Ascending aorta (tissue), 2 donors: ENCODE measurements at regions of chr4 and their contacts with region 1.

Region 1: GRCh38 chr4:94814237-94814636 is 56.5 kb downstream of the BMPR1B start:
- DNase-seq: no peak
- H3K4me3 ChIP-seq: no peak overlapping the region
- H3K27ac ChIP-seq: no peak overlapping the region
- H3K4me1 ChIP-seq: peaks cover 0 to 2% of the 10 kb centered on the region in 2 donors
- H3K27me3 ChIP-seq: no peaks in the 10 kb centered on the region
- CTCF ChIP-seq: no peak

Region 2: DNA sequence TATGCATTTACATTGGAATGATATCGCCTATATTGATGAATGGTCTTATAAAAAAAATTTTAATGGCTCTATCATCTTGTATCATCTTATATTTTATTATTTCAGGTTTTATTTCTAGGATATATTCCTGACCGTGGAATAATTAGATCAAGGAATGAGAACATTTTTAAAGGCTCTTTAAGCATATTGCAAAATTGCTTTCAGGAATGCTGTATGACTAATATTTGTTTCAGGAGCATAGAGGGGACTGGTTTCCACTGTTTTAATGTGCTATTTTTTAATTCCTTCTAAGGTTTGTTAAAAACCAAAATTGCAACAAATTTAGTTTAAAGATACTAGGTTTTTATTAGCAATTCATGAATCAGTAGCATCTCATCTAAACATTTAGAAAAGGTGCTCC is 63.7 kb after region 1 on chr4:
- intact Hi-C with region 1: loop called (anchors 5 kb)
- DNase-seq: no peak
- H3K4me3 ChIP-seq: no peak overlapping the region
- H3K27ac ChIP-seq: peak overlapping the region in 1 of 2 donors; percentile 1
- H3K4me1 ChIP-seq: no peaks in the 10 kb centered on the region
- H3K27me3 ChIP-seq: no peaks in the 10 kb centered on the region
- CTCF ChIP-seq: no peak

Region 3: GRCh38 chr4:94965852-94966251 is 151.6 kb after region 1 on chr4:
- intact Hi-C with region 1: no loop called
- DNase-seq: no peak
- H3K4me3 ChIP-seq: no peak overlapping the region
- H3K27ac ChIP-seq: no peak overlapping the region
- H3K4me1 ChIP-seq: peaks cover 0 to 4% of the 10 kb centered on the region in 2 donors
- H3K27me3 ChIP-seq: no peaks in the 10 kb centered on the region
- CTCF ChIP-seq: no peak

Region 4: GRCh38 chr4:95317085-95317793 is 503.0 kb after region 1 on chr4:
- intact Hi-C with region 1: no loop called
- DNase-seq: no peak
- H3K4me3 ChIP-seq: no peak overlapping the region
- H3K27ac ChIP-seq: no peak overlapping the region
- H3K4me1 ChIP-seq: peaks cover 0 to 3% of the 10 kb centered on the region in 2 donors
- H3K27me3 ChIP-seq: no peaks in the 10 kb centered on the region
- CTCF ChIP-seq: no peak